ENCODE measurements at regions of chr17 and their contacts with region 1.

Region 1: DNA sequence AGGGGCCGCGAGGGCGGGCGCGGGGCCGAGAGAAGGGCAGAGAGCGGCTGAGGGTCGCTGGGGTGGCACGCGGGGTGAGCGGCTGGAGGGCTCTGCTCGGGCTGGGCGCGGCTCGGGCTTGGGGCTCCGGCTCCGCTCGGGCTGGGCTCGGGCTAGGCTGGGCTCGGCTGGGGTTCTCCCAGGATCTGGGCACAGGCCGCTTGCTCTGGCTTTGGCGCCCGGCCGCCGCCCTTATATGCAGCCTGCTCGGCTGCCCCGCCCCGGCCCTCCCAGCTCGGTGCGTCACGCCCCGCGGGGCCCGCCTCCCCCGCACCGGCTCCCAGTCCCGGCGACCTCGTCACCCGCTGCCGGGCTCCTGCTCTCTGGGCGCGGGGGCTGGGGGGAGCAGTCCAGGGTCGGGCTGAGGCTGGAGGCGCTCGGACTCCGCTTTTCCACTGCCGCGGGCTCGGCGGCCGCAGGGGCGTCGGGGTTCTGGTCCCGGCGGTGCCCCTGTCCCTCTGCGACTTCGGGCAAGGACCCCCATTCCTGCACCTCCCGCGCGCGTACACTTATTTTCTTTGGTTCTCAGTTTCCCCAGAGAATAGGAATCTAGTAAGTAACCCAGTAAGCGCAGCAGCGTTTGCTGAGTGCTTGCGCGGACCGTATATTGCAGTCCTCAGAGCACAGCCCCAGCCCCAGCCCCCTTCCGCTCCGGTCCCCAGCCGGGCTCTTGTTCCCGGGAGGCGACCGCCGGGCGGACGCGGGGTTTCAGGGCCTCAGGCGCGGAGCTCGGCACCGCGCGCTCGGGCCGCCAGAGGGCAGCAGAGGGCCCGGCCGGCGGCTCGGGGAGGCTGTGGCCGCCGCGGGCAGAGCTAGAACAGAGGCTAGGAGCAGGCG is at the start of gene RASD1:
- DNase-seq: peak in 1 of 2 experiments; percentile 93
- H3K4me3 ChIP-seq: peak within 1 kb of the TSS; percentile 43 to 70 (median 59)
- H3K27ac ChIP-seq: no peak within 1 kb of the TSS
- H3K4me1 ChIP-seq: peaks cover 5 to 29% (median 22%) of the 10 kb centered on the region in 4 experiments
- H3K27me3 ChIP-seq: peaks cover 14 to 26% (median 22%) of the 10 kb centered on the region in 4 experiments; a peak in 6 of 7 replicates
- CTCF ChIP-seq: peak; percentile 78 to 97 (median 81)
- EP300 ChIP-seq: peak in 1 of 2 experiments; percentile 70; a peak in 1 of 3 replicates
- POLR2A ChIP-seq: peak in 1 of 2 experiments; percentile 98; a peak in 2 of 3 replicates
- RAD21 ChIP-seq: peak; percentile 71 to 93
- total RNA-seq, gene RASD1: 1.8 and 2.6 TPM in 2 replicates

Region 2: GRCh38 chr17:17455173-17455572 is 41.3 kb before region 1 on chr17:
- CTCF ChIA-PET with region 1: no interaction called
- POLR2A ChIA-PET with region 1: no interaction called
- DNase-seq: no peak
- H3K4me3 ChIP-seq: no peak overlapping the region
- H3K27ac ChIP-seq: no peak overlapping the region
- H3K4me1 ChIP-seq: no peaks in the 10 kb centered on the region
- H3K27me3 ChIP-seq: no peaks in the 10 kb centered on the region
- CTCF ChIP-seq: no peak
- EP300 ChIP-seq: no peak
- POLR2A ChIP-seq: no peak
- RAD21 ChIP-seq: no peak

Region 3: DNA sequence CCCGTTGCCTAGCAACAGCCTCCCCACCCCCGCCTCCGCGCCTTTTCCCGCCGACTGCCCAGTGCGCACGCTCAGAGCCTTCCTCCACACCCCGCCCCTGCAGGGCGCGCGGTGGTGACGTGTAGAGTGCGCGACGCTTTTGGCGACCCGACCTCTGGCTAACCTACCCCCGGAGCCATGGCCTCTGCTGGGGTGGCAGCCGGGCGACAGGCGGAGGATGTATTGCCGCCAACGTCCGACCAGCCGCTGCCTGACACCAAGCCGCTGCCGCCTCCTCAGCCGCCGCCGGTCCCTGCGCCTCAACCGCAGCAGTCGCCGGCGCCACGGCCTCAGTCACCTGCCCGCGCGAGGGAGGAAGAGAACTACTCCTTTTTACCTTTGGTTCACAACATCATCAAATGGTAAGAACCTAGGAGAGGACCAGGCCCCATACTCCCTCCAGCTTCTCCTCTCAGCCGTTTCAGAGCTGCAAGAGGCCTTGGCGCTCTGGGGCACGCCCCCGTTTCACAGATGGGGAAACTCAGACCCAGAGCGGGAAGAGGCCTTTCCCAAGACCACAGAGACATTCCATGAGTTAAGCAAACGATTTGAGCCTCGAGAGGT is 19.5 kb before region 1 on chr17 and contains the start of gene MED9:
- CTCF ChIA-PET with region 1: interaction called, 6 read pairs
- POLR2A ChIA-PET with region 1: interaction called, 12 read pairs
- DNase-seq: peak; percentile 76 to 98
- H3K4me3 ChIP-seq: peak within 1 kb of the TSS; percentile 82 to 97 (median 96)
- H3K27ac ChIP-seq: peak within 1 kb of the TSS; percentile 88
- H3K4me1 ChIP-seq: peaks cover 0 to 5% (median 1%) of the 10 kb centered on the region in 4 experiments; a peak in 1 of 7 replicates
- H3K27me3 ChIP-seq: peaks cover 0 to 4% (median 0%) of the 10 kb centered on the region in 4 experiments; a peak in 2 of 7 replicates
- CTCF ChIP-seq: no peak; a peak in 1 of 4 replicates
- EP300 ChIP-seq: no peak
- POLR2A ChIP-seq: peak; percentile 63 to 91
- RAD21 ChIP-seq: peak in 1 of 2 experiments; percentile 8; a peak in 1 of 4 replicates
- total RNA-seq, gene MED9: 15.8 and 16.9 TPM in 2 replicates

Region 4: GRCh38 chr17:17511881-17512858 is 15.7 kb after region 1 on chr17:
- CTCF ChIA-PET with region 1: interaction called, 47 read pairs
- POLR2A ChIA-PET with region 1: interaction called, 26 read pairs
- DNase-seq: no peak
- H3K4me3 ChIP-seq: no peak overlapping the region
- H3K27ac ChIP-seq: no peak overlapping the region
- H3K4me1 ChIP-seq: peaks cover 4 to 24% (median 12%) of the 10 kb centered on the region in 4 experiments
- H3K27me3 ChIP-seq: no peaks in the 10 kb centered on the region
- CTCF ChIP-seq: no peak
- EP300 ChIP-seq: no peak
- POLR2A ChIP-seq: no peak
- RAD21 ChIP-seq: no peak

Region 5: GRCh38 chr17:17523001-17523730 is 26.7 kb after region 1 on chr17:
- CTCF ChIA-PET with region 1: interaction called, 19 read pairs
- POLR2A ChIA-PET with region 1: interaction called, 9 read pairs
- DNase-seq: no peak
- H3K4me3 ChIP-seq: no peak overlapping the region
- H3K27ac ChIP-seq: no peak overlapping the region
- H3K4me1 ChIP-seq: peaks cover 0 to 17% (median 10%) of the 10 kb centered on the region in 4 experiments; a peak in 6 of 7 replicates
- H3K27me3 ChIP-seq: no peaks in the 10 kb centered on the region
- CTCF ChIP-seq: 0 out of 4 replicates have a peak, but pooled peaks of 1 of the 3 experiments have one; percentile 5
- EP300 ChIP-seq: no peak
- POLR2A ChIP-seq: no peak
- RAD21 ChIP-seq: no peak

Region 6: DNA sequence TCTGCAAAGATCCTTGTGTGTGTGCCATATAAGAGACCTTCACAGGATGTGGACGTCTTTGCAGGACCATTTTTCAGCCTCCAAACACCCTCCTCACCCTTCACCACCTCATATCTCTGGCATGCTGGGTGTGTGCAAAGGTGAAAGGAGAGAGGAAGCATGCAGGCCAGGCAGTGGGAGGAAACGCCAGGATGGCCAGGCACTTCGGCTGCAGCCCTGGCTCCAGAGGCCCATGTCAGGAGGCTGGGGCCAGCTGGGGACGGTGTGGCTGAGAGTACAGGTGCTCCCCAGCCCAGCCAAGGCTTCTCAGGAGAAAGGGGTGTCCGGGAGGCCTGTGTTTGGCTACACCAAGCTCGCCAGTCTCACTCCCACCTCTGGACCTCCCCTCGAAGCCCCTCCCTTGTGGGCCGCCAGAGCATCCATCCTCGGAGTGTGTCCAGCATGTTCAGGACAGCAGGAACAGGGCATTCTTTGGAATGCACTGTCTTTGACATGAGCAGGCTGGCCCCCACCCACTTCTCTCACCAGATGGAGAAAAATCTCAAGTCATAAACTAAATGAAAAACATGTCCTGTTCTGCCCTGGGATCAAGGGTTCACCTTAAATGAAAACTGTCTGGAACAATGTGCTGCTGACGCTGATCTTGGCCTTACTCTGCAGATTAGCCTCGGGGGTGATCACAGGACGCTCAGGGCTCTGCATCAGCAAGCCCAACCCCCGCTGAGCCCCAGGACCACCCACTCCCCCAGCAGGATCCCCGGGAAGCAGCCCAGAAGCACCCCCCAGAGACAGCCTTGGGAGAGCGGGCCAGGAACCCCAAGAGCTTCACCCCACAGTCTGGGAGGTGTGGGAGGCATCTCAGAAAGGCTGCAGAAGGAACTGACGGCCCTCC is 79.2 kb after region 1 on chr17:
- CTCF ChIA-PET with region 1: interaction called, 81 read pairs
- POLR2A ChIA-PET with region 1: interaction called, 7 read pairs
- DNase-seq: no peak
- H3K4me3 ChIP-seq: no peak overlapping the region
- H3K27ac ChIP-seq: no peak overlapping the region
- H3K4me1 ChIP-seq: no peaks in the 10 kb centered on the region
- H3K27me3 ChIP-seq: no peaks in the 10 kb centered on the region
- CTCF ChIP-seq: no peak
- EP300 ChIP-seq: no peak
- POLR2A ChIP-seq: no peak
- RAD21 ChIP-seq: no peak

Region 7: DNA sequence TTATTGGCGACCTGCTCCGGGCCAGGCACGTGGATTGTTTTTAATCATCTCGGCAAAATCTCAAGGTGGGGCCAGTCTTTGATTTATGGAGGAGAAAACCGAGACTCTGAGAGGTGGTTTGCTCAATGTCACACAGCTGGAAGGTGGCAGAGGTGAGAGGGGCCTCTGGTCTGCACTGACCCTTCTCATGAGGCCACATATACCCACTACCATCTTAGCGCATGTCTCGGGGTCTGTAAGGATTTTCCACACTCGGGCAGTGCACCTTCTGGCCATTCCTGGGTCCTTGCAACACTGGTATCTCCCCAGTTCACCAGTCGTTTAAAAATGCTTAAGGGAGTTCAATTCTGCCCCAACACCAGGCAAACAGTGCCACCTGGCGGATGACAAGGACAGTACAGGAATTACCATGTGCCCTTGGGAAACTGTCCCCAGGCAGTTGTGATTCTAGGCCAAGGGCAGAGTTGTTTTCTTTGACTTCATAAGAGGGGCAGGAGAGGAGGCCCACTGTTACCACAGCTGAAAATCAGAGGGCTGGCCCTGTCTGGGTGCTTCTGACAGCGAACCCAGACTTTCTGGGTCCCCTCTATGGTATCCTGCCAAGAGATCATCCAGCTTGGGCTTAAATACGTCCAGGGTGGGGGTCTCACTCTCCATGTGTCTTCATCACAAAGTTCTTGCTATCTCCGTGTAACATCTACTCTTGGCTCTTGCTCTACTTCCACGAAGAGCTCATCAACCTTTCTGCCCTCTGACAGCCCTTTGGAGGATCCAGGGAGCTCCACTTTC is 145.4 kb after region 1 on chr17:
- CTCF ChIA-PET with region 1: interaction called, 23 read pairs
- POLR2A ChIA-PET with region 1: interaction called, 10 read pairs
- DNase-seq: peak; percentile 65 to 90
- H3K4me3 ChIP-seq: no peak overlapping the region
- H3K27ac ChIP-seq: no peak overlapping the region
- H3K4me1 ChIP-seq: no peaks in the 10 kb centered on the region
- H3K27me3 ChIP-seq: no peaks in the 10 kb centered on the region
- CTCF ChIP-seq: peak; percentile 87 to 96 (median 93)
- EP300 ChIP-seq: no peak
- POLR2A ChIP-seq: no peak
- RAD21 ChIP-seq: peak; percentile 99